ENCODE measurements at regions of chr19 and their contacts with region 1.

Region 1: GRCh38 chr19:15379083-15379995 is at the start of gene AKAP8:
- DNase-seq: peak; percentile 99
- H3K4me3 Mint-ChIP-seq: peak within 1 kb of the TSS; percentile 95
- H3K27ac Mint-ChIP-seq: peak within 1 kb of the TSS; percentile 96
- H3K4me1 Mint-ChIP-seq: peaks cover 42% of the 10 kb centered on the region
- H3K27me3 Mint-ChIP-seq: peaks cover 2% of the 10 kb centered on the region
- total RNA-seq, gene AKAP8: 31.5 to 37.2 TPM

Region 2: GRCh38 chr19:15125232-15126067 is 253.9 kb before region 1 on chr19:
- CTCF ChIA-PET with region 1: interaction called, 4 read pairs
- POLR2A ChIA-PET with region 1: no interaction called
- intact Hi-C with region 1: loop called (anchors 1 kb)
- DNase-seq: peak; percentile 99
- H3K4me3 Mint-ChIP-seq: peak overlapping the region; percentile 100
- H3K27ac Mint-ChIP-seq: peak overlapping the region; percentile 99
- H3K4me1 Mint-ChIP-seq: peaks cover 30% of the 10 kb centered on the region
- H3K27me3 Mint-ChIP-seq: no peaks in the 10 kb centered on the region

Region 3: GRCh38 chr19:15264061-15264932 is 115.0 kb before region 1 on chr19:
- CTCF ChIA-PET with region 1: interaction called, 13 read pairs
- POLR2A ChIA-PET with region 1: no interaction called
- intact Hi-C with region 1: loop called (anchors 5 kb)
- DNase-seq: peak; percentile 80
- H3K4me3 Mint-ChIP-seq: no peak overlapping the region
- H3K27ac Mint-ChIP-seq: no peak overlapping the region
- H3K4me1 Mint-ChIP-seq: peaks cover 10% of the 10 kb centered on the region
- H3K27me3 Mint-ChIP-seq: no peaks in the 10 kb centered on the region

Region 4: GRCh38 chr19:15358918-15359317 is 20.4 kb before region 1 on chr19:
- CTCF ChIA-PET with region 1: interaction called, 3 read pairs
- POLR2A ChIA-PET with region 1: interaction called, 11 read pairs
- intact Hi-C with region 1: no loop called
- DNase-seq: no peak
- H3K4me3 Mint-ChIP-seq: no peak overlapping the region
- H3K27ac Mint-ChIP-seq: peak overlapping the region; percentile 16
- H3K4me1 Mint-ChIP-seq: peaks cover 5% of the 10 kb centered on the region
- H3K27me3 Mint-ChIP-seq: no peaks in the 10 kb centered on the region

Region 5: GRCh38 chr19:15836595-15837337 is 457.4 kb after region 1 on chr19:
- CTCF ChIA-PET with region 1: no interaction called
- POLR2A ChIA-PET with region 1: no interaction called
- intact Hi-C with region 1: loop called (anchors 2 kb)
- DNase-seq: peak; percentile 97
- H3K4me3 Mint-ChIP-seq: peak overlapping the region; percentile 83
- H3K27ac Mint-ChIP-seq: peak overlapping the region; percentile 95
- H3K4me1 Mint-ChIP-seq: peaks cover 21% of the 10 kb centered on the region
- H3K27me3 Mint-ChIP-seq: no peaks in the 10 kb centered on the region